Colonic mucosa (tissue), 4 donors: ENCODE measurements at regions of chr11 and their contacts with region 1.

Region 1: DNA sequence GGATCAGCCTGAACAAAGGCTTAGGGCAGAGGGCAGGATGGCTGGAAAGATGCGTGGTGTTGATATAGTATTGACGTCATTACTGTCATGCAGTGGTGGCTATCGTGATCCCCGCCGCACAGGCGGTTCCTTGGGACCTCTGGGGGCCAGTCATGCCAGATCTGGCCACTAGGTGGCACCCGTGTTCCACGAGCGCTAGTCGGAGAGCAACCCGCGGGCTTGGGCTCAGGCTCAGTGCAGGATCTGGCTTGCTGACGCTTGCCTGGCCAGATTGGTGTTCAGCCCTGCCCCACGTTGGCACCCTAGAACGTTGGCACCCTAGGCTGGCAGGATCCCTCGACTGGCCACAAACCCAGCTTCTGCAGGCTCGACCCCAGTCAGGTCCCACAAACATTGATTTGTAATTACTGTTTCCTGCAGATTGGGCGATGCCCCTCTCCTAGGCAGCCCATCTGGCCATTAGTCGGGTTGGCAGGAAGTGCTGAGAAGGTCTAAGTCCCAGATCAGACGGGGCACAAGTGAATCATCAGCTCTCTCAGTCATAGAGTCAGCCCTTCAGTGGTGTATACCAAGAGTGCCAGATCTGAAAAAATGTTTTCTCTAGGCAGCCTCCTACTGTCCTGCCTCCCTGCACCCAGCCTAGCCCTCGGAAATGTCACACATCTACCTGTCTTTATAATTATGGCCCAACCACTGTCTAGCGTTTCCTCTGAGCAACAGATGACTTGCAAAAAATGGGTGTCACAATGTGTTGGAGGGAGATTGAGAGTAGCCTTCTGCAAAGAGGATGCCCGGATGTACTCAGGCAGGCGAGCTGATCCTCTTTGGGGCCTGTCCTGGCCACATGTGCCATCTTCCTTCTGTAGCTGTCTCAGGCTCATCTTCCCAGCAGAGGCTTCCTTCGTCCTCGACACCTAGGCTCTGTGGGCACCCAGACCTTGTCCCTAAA is 315.3 kb downstream of the TMEM135 start:
- DNase-seq: peak; percentile 85
- H3K4me3 ChIP-seq: no peak overlapping the region
- H3K27ac ChIP-seq: no peak overlapping the region
- H3K4me1 ChIP-seq: peaks cover 5% of the 10 kb centered on the region
- H3K27me3 ChIP-seq: no peaks in the 10 kb centered on the region
- CTCF ChIP-seq: peak; percentile 99

Region 2: GRCh38 chr11:87421422-87421821 is 68.4 kb after region 1 on chr11:
- intact Hi-C with region 1: loop called (anchors 1 kb)
- DNase-seq: peak; percentile 57
- H3K4me3 ChIP-seq: no peak overlapping the region
- H3K27ac ChIP-seq: no peak overlapping the region
- H3K4me1 ChIP-seq: no peaks in the 10 kb centered on the region
- H3K27me3 ChIP-seq: no peaks in the 10 kb centered on the region
- CTCF ChIP-seq: peak; percentile 75

Region 3: GRCh38 chr11:87583931-87584330 is 230.9 kb after region 1 on chr11:
- intact Hi-C with region 1: no loop called
- DNase-seq: no peak
- H3K4me3 ChIP-seq: no peak overlapping the region
- H3K27ac ChIP-seq: no peak overlapping the region
- H3K4me1 ChIP-seq: no peaks in the 10 kb centered on the region
- H3K27me3 ChIP-seq: no peaks in the 10 kb centered on the region
- CTCF ChIP-seq: no peak